Naive thymus-derived CD4-positive, alpha-beta T cell (primary cell): ENCODE measurements at regions of chrX and their contacts with region 1.

Region 1: DNA sequence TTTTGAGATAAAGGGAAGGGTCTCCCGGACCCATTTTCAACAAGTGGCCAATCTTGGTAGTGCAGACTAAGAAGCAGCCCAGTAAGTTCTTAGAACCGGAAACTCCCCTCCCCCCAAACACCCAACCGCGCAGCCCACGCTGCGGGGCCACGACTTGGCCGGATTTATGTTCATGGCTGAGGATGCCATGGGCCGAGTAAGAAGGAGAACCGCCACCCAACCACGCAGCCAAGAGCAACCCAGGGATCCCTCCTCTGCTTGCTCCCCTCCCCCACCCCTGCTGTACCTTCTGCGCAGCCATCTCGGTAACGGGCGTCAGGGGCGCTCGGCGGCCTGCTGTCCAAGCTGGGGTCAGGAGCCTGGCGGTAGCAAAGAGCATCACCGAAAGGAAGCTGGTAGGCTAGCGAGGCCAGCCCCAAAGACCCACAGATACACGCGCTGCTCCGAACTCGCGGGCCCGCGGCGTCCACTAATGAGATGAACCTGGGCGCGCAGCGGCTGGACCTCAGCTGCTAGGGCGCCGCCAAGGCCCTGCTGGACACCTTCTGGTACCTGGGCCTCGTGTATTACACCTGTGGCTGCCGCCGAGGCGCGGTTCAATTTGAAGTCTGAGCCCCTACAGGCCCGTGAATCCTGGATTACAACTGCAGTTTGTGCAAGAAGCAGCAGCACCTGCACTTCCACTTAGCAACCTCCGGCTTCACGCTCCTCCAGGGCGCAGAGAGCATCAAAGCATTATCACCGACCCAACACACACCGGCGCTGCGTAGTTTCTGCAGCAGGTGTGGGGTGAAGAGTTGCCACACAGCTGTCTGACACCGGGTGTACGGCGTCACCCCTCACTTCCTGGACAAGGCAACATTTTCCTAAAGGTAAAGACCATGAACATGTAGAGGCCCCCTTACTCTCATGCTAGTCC is 63.4 kb downstream of the NUDT10 start:
- DNase-seq: peak; percentile 24 to 80 (median 70)
- ATAC-seq: peak; percentile 94
- H3K4me3 ChIP-seq: peak overlapping the region; percentile 74
- H3K4me3 Mint-ChIP-seq: peak overlapping the region; percentile 89 to 98 (median 94)
- H3K27ac ChIP-seq: peak overlapping the region; percentile 73
- H3K27ac Mint-ChIP-seq: peak overlapping the region; percentile 89 to 99 (median 93)
- H3K4me1 ChIP-seq: no peaks in the 10 kb centered on the region
- H3K4me1 Mint-ChIP-seq: peaks cover 10 to 69% (median 61%) of the 10 kb centered on the region in 7 donors
- H3K27me3 ChIP-seq: no peaks in the 10 kb centered on the region
- H3K27me3 Mint-ChIP-seq: no peaks in the 10 kb centered on the region

Region 2: GRCh38 chrX:51316271-51316670 is 79.8 kb before region 1 on chrX:
- CTCF ChIA-PET with region 1: no interaction called
- POLR2A ChIA-PET with region 1: no interaction called
- intact Hi-C with region 1: no loop called
- DNase-seq: no peak
- ATAC-seq: no peak
- H3K4me3 ChIP-seq: no peak overlapping the region
- H3K4me3 Mint-ChIP-seq: no peak overlapping the region
- H3K27ac ChIP-seq: no peak overlapping the region
- H3K27ac Mint-ChIP-seq: no peak overlapping the region
- H3K4me1 ChIP-seq: no peaks in the 10 kb centered on the region
- H3K4me1 Mint-ChIP-seq: no peaks in the 10 kb centered on the region
- H3K27me3 ChIP-seq: no peaks in the 10 kb centered on the region
- H3K27me3 Mint-ChIP-seq: no peaks in the 10 kb centered on the region

Region 3: DNA sequence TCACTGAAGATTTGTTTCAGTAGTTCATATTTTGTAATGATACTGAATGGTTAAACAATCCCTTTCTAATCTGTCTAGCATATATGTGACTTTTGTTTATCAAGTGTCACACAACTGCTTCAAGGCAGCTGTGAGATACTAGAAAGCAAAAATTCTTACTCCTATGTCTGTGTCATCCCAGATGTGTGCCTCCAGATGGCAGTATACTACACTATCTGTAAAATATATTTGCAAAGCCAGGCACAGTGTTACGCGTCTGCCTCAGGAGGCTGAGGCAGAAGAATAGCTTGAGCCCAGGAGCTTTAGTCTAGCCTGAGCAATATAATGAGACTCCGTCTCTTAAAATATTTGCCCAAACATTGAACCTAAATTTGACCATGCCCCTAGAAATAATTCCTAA is 59.5 kb before region 1 on chrX:
- CTCF ChIA-PET with region 1: interaction called, 4 read pairs
- POLR2A ChIA-PET with region 1: interaction called, 3 read pairs
- intact Hi-C with region 1: loop called in 1 of 2 experiments (anchors 1 kb)
- DNase-seq: peak in 7 of 9 donors; percentile 22 to 52 (median 40)
- ATAC-seq: peak; percentile 88
- H3K4me3 ChIP-seq: no peak overlapping the region
- H3K4me3 Mint-ChIP-seq: no peak overlapping the region
- H3K27ac ChIP-seq: no peak overlapping the region
- H3K27ac Mint-ChIP-seq: no peak overlapping the region
- H3K4me1 ChIP-seq: no peaks in the 10 kb centered on the region
- H3K4me1 Mint-ChIP-seq: peaks cover 0 to 11% (median 2%) of the 10 kb centered on the region in 7 donors
- H3K27me3 ChIP-seq: no peaks in the 10 kb centered on the region
- H3K27me3 Mint-ChIP-seq: peaks cover 0 to 8% (median 0%) of the 10 kb centered on the region in 5 donors